ENCODE measurements at regions of chr15 and their contacts with region 1.

Region 1: GRCh38 chr15:43370975-43371974 is at the starts of genes TUBGCP4 and ZSCAN29:
- DNase-seq: peak; percentile 25 to 79 (median 53)
- ATAC-seq: peak; percentile 73 to 82 (median 80)
- H3K4me3 ChIP-seq: peak within 1 kb of the TSS; percentile 86 to 94
- H3K4me3 Mint-ChIP-seq: peak within 1 kb of the TSS; percentile 88 to 91 (median 91)
- H3K27ac ChIP-seq: peak within 1 kb of the TSS; percentile 56
- H3K27ac Mint-ChIP-seq: peak within 1 kb of the TSS; percentile 67 to 84
- H3K4me1 ChIP-seq: peaks cover 17 to 26% of the 10 kb centered on the region in 2 experiments
- H3K4me1 Mint-ChIP-seq: peaks cover 59 to 64% (median 61%) of the 10 kb centered on the region in 3 donors
- H3K27me3 ChIP-seq: no peaks in the 10 kb centered on the region
- H3K27me3 Mint-ChIP-seq: no peaks in the 10 kb centered on the region
- total RNA-seq, gene TUBGCP4: 10.4 to 24.3 (median 21.3) TPM
- total RNA-seq, gene ZSCAN29: 16.6 to 38.3 (median 32.2) TPM

Region 2: DNA sequence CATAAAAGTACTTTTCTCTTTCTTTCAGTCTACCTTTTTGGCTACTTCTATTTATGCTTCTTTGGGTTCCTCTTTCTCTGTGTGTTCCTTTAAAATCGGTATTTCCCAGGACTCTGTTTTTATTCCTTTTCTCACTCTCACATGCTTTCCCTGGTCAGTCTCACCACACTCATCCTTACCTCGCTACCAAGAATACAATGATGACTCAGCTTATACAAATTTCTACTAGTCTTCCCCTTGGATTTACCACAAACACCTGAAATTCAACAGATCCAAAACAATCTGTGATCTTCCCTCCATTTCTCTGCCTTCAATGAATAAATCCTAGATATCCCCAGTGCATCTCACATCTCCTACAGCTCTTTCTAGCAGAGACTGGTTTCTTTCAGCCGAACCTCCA is 52.5 kb after region 1 on chr15:
- CTCF ChIA-PET with region 1: no interaction called
- POLR2A ChIA-PET with region 1: interaction called in 1 of 2 experiments, 12 read pairs
- DNase-seq: no peak
- ATAC-seq: no peak
- H3K4me3 ChIP-seq: no peak overlapping the region
- H3K4me3 Mint-ChIP-seq: no peak overlapping the region
- H3K27ac ChIP-seq: no peak overlapping the region
- H3K27ac Mint-ChIP-seq: no peak overlapping the region
- H3K4me1 ChIP-seq: peaks cover 0 to 4% of the 10 kb centered on the region in 2 experiments
- H3K4me1 Mint-ChIP-seq: peaks cover 4 to 15% (median 10%) of the 10 kb centered on the region in 3 donors
- H3K27me3 ChIP-seq: no peaks in the 10 kb centered on the region
- H3K27me3 Mint-ChIP-seq: no peaks in the 10 kb centered on the region

Measured in T-cell (primary cell).